Caco-2 (cell line): ENCODE measurements at regions of chr17 and their contacts with region 1.

Region 1: GRCh38 chr17:82022981-82023374 is at the start of gene LRRC45:
- DNase-seq: peak; percentile 100
- H3K4me3 ChIP-seq: peak within 1 kb of the TSS; percentile 85
- H3K4me3 Mint-ChIP-seq: peak within 1 kb of the TSS; percentile 83
- H3K27ac Mint-ChIP-seq: peak within 1 kb of the TSS; percentile 59
- H3K4me1 ChIP-seq: peaks cover 15% of the 10 kb centered on the region
- H3K4me1 Mint-ChIP-seq: peaks cover 6% of the 10 kb centered on the region
- H3K27me3 ChIP-seq: no peaks in the 10 kb centered on the region
- H3K27me3 Mint-ChIP-seq: no peaks in the 10 kb centered on the region
- CTCF ChIP-seq: no peak
- total RNA-seq, gene LRRC45: 33.2 and 38.2 TPM in 2 replicates

Region 2: DNA sequence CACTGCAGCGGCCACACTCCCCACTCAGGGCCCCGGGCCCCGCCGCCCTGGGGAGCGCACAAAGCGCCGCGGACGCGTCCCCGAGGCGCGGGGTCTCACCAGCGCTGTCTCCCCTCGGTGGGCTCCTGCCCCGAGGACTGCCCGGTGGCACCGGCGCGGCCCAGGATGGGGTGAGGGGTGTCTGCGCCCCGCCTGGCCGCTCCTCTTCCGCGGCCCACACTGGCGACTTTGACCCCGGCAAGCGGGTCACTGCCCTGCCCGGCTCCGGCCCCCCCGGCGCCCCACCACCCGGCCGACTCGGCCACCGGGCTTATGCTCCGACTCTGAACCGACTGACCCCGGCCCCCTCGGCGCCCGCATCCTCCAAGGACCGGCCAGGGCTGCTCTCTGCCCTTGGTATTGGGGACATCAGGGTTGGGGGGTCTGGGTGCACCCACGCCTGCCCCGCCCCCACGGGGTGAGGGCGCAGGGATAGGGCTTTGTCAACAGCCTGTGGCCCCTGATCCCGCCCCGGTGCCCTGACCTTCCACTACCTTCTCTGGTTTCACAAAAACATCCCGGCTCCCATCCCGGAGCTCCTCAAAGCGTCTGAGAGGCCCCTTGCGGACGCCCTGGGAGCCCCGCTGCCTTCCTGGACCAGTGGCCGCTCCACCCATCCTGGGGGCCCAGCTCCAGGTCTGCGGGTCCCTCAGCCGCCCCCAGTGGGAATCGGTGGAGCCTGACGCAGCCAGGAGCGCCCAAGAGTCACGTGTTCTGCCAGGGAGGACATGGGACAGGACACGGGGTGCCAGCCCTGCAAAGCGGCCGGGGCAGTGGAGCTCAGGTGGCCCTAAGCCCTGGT is 218.2 kb before region 1 on chr17:
- CTCF ChIA-PET with region 1: no interaction called
- POLR2A ChIA-PET with region 1: interaction called, 10 read pairs
- intact Hi-C with region 1: no loop called
- DNase-seq: no peak
- H3K4me3 ChIP-seq: peak overlapping the region; percentile 32
- H3K4me3 Mint-ChIP-seq: peak overlapping the region; percentile 55
- H3K27ac Mint-ChIP-seq: no peak overlapping the region
- H3K4me1 ChIP-seq: peaks cover 14% of the 10 kb centered on the region
- H3K4me1 Mint-ChIP-seq: peaks cover 11% of the 10 kb centered on the region
- H3K27me3 ChIP-seq: no peaks in the 10 kb centered on the region
- H3K27me3 Mint-ChIP-seq: peaks cover 24% of the 10 kb centered on the region
- CTCF ChIP-seq: no peak

Region 3: GRCh38 chr17:81927653-81928543 is 95.1 kb before region 1 on chr17 and contains the start of gene MAFG:
- CTCF ChIA-PET with region 1: interaction called, 10 read pairs
- POLR2A ChIA-PET with region 1: interaction called, 3 read pairs
- intact Hi-C with region 1: loop called (anchors 5 kb)
- DNase-seq: peak; percentile 90 to 94
- H3K4me3 ChIP-seq: peak within 1 kb of the TSS; percentile 89
- H3K4me3 Mint-ChIP-seq: peak within 1 kb of the TSS; percentile 77
- H3K27ac Mint-ChIP-seq: peak within 1 kb of the TSS; percentile 85
- H3K4me1 ChIP-seq: peaks cover 14% of the 10 kb centered on the region
- H3K4me1 Mint-ChIP-seq: peaks cover 24% of the 10 kb centered on the region
- H3K27me3 ChIP-seq: no peaks in the 10 kb centered on the region
- H3K27me3 Mint-ChIP-seq: no peaks in the 10 kb centered on the region
- CTCF ChIP-seq: peak; percentile 22 to 26
- total RNA-seq, gene MAFG: 28.9 and 29.1 TPM in 2 replicates

Region 4: DNA sequence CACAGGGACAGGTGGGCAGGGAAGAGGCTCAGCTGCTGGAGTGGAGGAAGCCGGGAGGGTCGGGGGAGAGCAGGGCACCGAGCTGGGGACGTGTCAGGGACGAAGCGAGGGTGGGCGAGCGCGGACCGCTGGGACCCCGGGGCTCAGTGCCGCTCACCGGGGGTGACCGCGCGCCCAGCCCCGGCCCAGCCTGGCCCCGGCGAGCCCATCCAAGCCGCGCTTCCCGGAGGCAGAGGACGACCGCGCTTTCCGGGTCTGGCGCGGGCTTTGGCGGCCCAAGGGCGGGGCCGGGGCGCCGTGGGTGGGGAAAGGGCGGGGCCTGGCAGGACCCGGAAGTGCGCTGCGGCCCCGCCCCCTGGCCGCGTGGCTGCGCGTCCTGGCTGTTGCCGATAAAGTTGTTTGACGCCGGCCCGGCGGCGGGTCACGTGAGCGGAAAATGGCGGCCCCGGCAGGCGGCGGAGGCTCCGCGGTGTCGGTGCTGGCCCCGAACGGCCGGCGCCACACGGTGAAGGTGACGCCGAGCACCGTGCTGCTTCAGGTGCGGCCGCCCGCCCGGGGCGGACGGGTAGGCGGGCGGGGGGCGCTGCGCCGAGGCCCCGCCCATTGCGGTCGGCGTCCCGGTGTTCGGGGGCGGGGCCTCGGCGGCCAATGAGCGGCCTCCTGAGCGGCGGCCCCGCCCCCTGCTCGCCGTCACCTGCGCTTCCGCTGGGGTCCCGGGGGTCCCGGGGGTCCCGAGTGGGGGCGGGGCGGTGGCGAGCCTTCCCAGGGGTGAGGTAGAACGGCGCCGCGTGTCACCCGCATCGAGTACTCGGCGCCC is 45.6 kb before region 1 on chr17 and contains the start of gene ASPSCR1:
- CTCF ChIA-PET with region 1: interaction called, 5 read pairs
- POLR2A ChIA-PET with region 1: no interaction called
- intact Hi-C with region 1: loop called (anchors 1 kb)
- DNase-seq: peak; percentile 90 to 96
- H3K4me3 ChIP-seq: peak within 1 kb of the TSS; percentile 79
- H3K4me3 Mint-ChIP-seq: peak within 1 kb of the TSS; percentile 98
- H3K27ac Mint-ChIP-seq: peak within 1 kb of the TSS; percentile 97
- H3K4me1 ChIP-seq: peaks cover 8% of the 10 kb centered on the region; the same call in 1 of the 2 replicates
- H3K4me1 Mint-ChIP-seq: peaks cover 5% of the 10 kb centered on the region
- H3K27me3 ChIP-seq: no peaks in the 10 kb centered on the region
- H3K27me3 Mint-ChIP-seq: no peaks in the 10 kb centered on the region
- CTCF ChIP-seq: no peak
- total RNA-seq, gene ASPSCR1: 58.0 and 59.2 TPM in 2 replicates

Region 5: DNA sequence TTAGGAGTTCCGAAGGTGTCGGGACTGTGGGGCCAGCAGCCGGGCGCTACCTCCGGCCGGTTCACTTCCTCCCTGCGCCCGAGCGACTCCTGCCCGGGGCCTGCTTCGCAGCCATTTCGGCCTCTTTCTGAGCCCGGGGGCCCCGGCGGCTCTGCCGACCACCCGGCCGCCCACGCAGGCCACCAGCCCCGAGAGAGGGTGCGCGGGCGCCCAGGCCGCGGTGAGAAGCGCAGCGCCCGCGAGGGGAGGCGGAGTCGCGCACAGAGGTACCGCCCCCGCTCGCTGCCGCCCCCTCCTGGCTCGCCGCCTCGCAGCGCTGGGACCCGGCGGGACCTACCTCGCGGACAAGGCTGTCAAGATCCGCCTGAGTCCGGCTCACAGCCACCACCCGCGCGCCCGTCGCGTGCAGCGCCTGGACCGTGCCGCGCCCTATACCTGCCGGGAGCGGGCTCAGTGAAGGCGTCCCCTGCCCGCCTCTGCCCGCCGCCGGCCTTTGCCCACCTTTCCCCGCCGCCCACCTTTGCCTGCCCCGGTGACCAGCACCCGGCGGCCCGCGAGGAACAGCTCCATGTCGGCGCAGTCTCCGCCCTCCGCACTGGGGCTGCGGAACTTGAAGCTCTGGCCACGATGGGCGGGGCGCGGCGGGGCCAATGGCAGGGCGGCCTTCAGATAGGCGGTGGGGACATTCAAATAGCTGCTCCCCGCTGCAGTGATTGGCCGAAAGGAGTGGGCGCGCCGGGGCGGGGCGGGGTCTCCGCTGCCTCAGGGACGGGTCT is 14.3 kb after region 1 on chr17 and contains the start of gene DCXR:
- CTCF ChIA-PET with region 1: interaction called, 42 read pairs
- POLR2A ChIA-PET with region 1: interaction called, 51 read pairs
- intact Hi-C with region 1: no loop called
- DNase-seq: peak; percentile 98 to 99
- H3K4me3 ChIP-seq: peak within 1 kb of the TSS; percentile 79
- H3K4me3 Mint-ChIP-seq: peak within 1 kb of the TSS; percentile 86
- H3K27ac Mint-ChIP-seq: peak within 1 kb of the TSS; percentile 91
- H3K4me1 ChIP-seq: peaks cover 21% of the 10 kb centered on the region
- H3K4me1 Mint-ChIP-seq: peaks cover 5% of the 10 kb centered on the region
- H3K27me3 ChIP-seq: no peaks in the 10 kb centered on the region
- H3K27me3 Mint-ChIP-seq: no peaks in the 10 kb centered on the region
- CTCF ChIP-seq: peak; percentile 80 to 87
- total RNA-seq, gene DCXR: 197 and 208 TPM in 2 replicates

Region 6: GRCh38 chr17:82153745-82154375 is 130.9 kb after region 1 on chr17:
- CTCF ChIA-PET with region 1: interaction called, 11 read pairs
- POLR2A ChIA-PET with region 1: no interaction called
- intact Hi-C with region 1: no loop called
- DNase-seq: peak; percentile 77 to 89
- H3K4me3 ChIP-seq: no peak overlapping the region
- H3K4me3 Mint-ChIP-seq: no peak overlapping the region
- H3K27ac Mint-ChIP-seq: no peak overlapping the region
- H3K4me1 ChIP-seq: 0 out of 2 replicates have a peak, but pooled peaks cover 3% of the 10 kb centered on the region
- H3K4me1 Mint-ChIP-seq: no peaks in the 10 kb centered on the region
- H3K27me3 ChIP-seq: no peaks in the 10 kb centered on the region
- H3K27me3 Mint-ChIP-seq: no peaks in the 10 kb centered on the region
- CTCF ChIP-seq: peak; percentile 93 to 96

Region 7: DNA sequence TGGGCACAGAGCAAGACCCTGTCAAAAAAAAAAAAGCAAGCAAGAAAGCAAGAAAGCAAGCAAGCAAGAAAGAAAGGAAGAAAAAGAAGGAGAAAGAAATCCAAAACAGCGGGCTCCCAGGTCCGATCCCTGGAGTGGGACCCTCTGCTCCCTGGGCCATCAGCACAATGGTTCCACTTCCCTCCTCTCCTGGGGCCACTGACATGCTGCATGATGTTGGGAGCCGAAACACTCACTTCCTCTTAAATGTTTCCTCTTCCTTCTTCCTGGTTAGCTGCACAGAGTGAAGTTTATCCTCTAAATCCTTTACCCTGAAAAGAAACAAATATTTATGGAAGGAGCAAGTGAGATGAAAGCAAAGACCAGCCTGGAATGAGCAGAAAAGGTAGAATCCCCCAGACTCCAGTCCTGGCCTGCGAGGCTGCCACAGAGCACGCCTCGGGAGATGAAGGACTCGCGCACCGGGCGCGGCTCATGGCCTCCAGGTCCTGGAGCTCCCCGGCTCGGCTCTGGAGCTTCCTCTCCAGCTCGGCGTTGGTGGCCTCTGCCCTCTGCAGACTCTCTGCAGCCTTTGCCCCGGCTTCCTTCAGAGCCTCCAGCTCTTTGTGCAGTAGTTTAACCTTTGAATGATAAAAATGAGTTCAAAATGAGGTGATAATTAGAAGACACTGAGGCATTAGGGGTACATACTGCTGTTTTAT is 170.7 kb after region 1 on chr17:
- CTCF ChIA-PET with region 1: no interaction called
- POLR2A ChIA-PET with region 1: no interaction called
- intact Hi-C with region 1: no loop called
- DNase-seq: no peak
- H3K4me3 ChIP-seq: no peak overlapping the region
- H3K4me3 Mint-ChIP-seq: no peak overlapping the region
- H3K27ac Mint-ChIP-seq: no peak overlapping the region
- H3K4me1 ChIP-seq: no peaks in the 10 kb centered on the region
- H3K4me1 Mint-ChIP-seq: no peaks in the 10 kb centered on the region
- H3K27me3 ChIP-seq: no peaks in the 10 kb centered on the region
- H3K27me3 Mint-ChIP-seq: no peaks in the 10 kb centered on the region
- CTCF ChIP-seq: no peak